Esophagus muscularis mucosa (tissue), 4 donors: ENCODE measurements at regions of chr2 and their contacts with region 1.

Region 1: DNA sequence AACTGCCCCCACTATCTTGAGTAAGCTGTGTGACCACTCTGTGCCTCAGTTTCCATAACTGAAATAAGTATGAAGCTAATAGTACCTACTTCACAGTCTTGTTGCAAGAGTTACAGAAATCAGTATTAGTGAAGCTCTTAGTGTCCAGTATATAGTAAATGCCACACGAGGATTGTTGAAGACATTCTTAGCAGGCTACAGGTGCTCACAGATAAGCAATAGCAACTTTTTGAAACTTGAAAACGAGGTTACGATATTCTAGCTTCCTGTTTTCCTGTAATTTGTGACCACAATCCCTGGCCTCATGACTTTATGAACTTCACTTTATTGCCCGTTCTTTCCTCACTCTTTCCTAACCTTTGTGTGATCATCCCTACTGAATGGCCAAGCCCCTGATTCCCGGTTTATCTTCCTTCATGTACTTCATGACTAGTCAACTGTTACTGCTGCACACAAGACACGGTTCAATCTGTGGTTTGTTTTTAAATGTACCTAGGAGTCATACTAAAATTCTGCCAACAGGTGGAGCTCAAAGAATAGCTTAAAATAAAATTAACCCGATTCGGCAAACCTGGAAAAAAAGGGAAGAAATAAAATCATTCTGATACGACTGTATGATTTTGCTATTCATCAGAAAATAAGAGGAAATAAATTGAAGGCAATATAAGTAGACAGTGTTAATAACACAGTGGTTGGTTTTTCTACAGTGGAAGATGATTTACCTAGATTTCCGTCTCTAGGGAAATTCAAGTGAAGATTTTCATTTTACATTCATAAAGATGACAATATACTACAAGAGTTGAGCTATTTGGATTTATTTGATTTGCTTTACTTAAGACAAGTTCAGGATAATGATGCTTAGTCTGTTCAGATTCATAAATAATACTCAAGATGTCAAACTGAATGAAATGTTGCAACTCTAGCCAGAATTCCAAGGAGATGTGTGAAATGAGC is 38.1 kb upstream of the STAT1 start:
- DNase-seq: no peak
- H3K4me3 ChIP-seq: no peak overlapping the region
- H3K27ac ChIP-seq: no peak overlapping the region
- H3K4me1 ChIP-seq: peaks cover 0 to 43% (median 22%) of the 10 kb centered on the region in 4 donors
- H3K27me3 ChIP-seq: peaks cover 0 to 5% (median 0%) of the 10 kb centered on the region in 4 donors
- CTCF ChIP-seq: peak; percentile 48 to 62 (median 61)
- EP300 ChIP-seq: no peak
- POLR2A ChIP-seq: no peak

Region 2: GRCh38 chr2:191155608-191156071 is 103.5 kb after region 1 on chr2:
- intact Hi-C with region 1: loop called (anchors 5 kb)
- DNase-seq: no peak
- H3K4me3 ChIP-seq: no peak overlapping the region
- H3K27ac ChIP-seq: no peak overlapping the region
- H3K4me1 ChIP-seq: peaks cover 0 to 8% (median 6%) of the 10 kb centered on the region in 4 donors
- H3K27me3 ChIP-seq: peaks cover 0 to 8% (median 0%) of the 10 kb centered on the region in 4 donors
- CTCF ChIP-seq: peak in 2 of 3 experiments; percentile 38 to 40
- EP300 ChIP-seq: no peak
- POLR2A ChIP-seq: no peak

Region 3: DNA sequence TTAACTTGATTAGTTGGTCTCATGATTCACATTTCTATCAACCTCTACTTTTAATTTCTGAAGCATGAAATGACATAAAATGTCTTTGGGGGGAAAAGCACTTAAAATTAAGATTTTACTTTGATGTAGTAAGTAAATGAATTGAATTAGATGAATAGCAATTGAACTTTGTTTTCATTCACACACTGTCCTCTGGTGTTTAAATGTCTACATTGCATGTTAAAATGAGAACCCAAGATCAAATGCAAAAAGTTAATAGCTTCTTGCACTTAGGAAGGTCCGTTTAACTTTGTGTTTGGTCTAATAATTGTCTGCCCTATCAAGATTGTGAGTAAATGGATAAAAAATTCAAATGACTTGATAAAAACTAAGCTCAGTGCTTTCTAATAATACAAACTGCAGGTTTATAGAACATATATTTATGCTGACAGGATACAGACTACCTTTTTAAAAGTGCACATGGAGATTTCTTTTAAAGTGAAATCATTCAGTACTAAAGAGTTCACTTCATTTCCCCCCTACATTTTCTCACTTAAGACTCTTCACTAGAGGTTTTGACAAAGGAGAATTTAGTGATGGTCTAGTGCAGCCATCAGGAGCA is 469.6 kb after region 1 on chr2:
- intact Hi-C with region 1: loop called (anchors 5 kb)
- DNase-seq: no peak
- H3K4me3 ChIP-seq: no peak overlapping the region
- H3K27ac ChIP-seq: no peak overlapping the region
- H3K4me1 ChIP-seq: no peaks in the 10 kb centered on the region
- H3K27me3 ChIP-seq: no peaks in the 10 kb centered on the region
- CTCF ChIP-seq: peak; percentile 69 to 83 (median 75)
- EP300 ChIP-seq: no peak
- POLR2A ChIP-seq: no peak